ENCODE measurements at regions of chr15 and their contacts with region 1.

Region 1: GRCh38 chr15:70679919-70680231 is 83.5 kb downstream of the UACA start:
- DNase-seq: no peak
- ATAC-seq: no peak
- H3K4me3 ChIP-seq: no peak overlapping the region
- H3K27ac ChIP-seq: no peak overlapping the region
- H3K4me1 ChIP-seq: no peaks in the 10 kb centered on the region
- H3K27me3 ChIP-seq: no peaks in the 10 kb centered on the region

Region 2: DNA sequence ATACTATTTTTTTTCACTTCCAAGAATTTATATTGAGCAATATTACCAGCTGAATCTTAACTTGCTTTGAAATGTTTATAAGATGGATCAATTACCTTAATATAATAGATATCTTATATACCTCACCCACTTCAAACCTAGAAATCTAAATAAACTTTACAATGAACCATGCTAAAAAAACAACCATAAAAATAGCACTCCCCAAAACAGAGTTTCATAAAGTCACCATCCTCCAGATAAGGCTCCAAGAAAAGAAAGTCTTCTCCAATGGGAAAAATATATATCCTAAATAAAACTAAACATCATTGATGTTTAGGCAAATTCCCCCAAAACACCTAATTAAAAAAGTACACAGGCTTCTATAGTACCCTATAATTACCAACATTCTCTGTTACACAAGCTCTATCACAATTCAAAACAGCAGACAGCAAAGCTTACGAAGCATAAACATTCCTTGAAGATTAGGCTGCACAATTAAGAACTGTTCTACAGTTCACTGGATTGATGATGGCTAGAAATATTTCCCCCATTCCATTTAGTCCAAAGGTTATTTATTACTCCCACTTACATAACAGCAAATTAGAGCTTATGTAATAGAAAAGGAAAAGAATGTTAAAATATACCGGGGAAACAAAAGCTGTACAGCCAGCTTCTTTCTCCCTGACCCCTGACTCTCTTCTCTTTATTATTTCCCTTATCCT is 34.0 kb after region 1 on chr15:
- intact Hi-C with region 1: no loop called
- DNase-seq: no peak
- ATAC-seq: peak; percentile 63
- H3K4me3 ChIP-seq: no peak overlapping the region
- H3K27ac ChIP-seq: no peak overlapping the region
- H3K4me1 ChIP-seq: peaks cover 5 to 10% of the 10 kb centered on the region in 2 donors
- H3K27me3 ChIP-seq: no peaks in the 10 kb centered on the region

Region 3: DNA sequence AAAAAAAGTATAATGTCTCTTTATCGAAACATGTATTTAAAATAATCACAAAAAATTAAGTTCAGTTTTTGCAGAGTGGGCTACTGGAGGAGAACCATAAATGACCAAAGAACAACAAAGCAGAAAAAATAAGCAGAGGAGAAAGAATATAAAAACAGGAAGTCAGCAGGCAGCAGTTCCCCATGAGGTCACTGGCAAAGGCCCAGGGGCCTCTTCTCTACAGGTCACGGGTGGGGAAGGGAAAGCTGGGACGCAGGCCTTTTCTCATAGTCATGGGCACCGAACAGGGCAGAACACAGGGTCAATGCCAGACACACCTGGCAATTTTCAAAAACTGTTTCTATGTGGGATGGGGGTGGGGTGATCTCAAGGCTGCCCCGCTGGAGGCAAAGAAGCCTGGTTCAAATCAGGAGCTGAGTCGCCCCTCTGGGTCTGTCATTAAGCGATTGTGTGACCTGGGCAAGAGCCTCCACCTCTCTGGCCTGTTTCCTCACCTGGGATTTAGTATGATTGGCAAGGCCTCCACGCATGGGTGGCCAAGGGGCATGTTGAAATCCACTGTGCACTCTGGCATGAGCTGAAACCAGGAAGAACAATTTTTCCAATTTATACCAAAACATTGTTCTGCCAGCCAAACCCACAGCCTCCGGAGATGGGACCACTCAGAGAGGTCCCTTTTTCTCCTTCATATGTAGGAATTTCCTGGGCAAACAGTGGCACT is 127.3 kb after region 1 on chr15:
- intact Hi-C with region 1: loop called (anchors 2 kb)
- DNase-seq: peak in 1 of 2 donors; percentile 88
- ATAC-seq: peak; percentile 53
- H3K4me3 ChIP-seq: no peak overlapping the region
- H3K27ac ChIP-seq: no peak overlapping the region
- H3K4me1 ChIP-seq: peaks cover 0 to 5% of the 10 kb centered on the region in 2 donors
- H3K27me3 ChIP-seq: no peaks in the 10 kb centered on the region

Region 4: DNA sequence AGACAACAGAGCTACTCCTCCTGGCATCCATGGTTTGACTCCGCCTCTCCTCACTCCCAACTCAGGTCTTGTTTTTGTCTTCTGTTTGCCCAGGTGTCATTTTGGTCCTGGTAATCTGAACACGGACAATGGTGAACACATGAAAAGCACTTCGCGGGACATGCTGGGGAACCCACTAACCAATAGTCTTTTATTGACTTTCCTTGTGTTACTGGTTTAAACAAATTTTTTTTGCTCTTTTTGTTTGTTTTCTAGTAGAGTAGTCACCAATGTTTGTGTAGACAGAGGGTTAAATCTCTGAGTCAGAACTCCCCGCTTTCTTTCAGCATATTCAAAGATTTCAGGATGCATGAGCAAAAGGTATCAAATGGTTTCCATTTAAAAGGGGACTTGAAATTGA is 135.8 kb after region 1 on chr15:
- intact Hi-C with region 1: loop called in 1 of 2 experiments (anchors 2 kb)
- DNase-seq: no peak
- ATAC-seq: no peak
- H3K4me3 ChIP-seq: no peak overlapping the region
- H3K27ac ChIP-seq: no peak overlapping the region
- H3K4me1 ChIP-seq: peaks cover 0 to 3% of the 10 kb centered on the region in 2 donors
- H3K27me3 ChIP-seq: no peaks in the 10 kb centered on the region

Measured in aorta (tissue), 5 donors.